Activated CD4-positive, alpha-beta memory T cell treated with anti-CD3 and anti-CD28 coated beads for 36 hours (primary cell): ENCODE measurements at regions of chr14 and their contacts with region 1.

Region 1: DNA sequence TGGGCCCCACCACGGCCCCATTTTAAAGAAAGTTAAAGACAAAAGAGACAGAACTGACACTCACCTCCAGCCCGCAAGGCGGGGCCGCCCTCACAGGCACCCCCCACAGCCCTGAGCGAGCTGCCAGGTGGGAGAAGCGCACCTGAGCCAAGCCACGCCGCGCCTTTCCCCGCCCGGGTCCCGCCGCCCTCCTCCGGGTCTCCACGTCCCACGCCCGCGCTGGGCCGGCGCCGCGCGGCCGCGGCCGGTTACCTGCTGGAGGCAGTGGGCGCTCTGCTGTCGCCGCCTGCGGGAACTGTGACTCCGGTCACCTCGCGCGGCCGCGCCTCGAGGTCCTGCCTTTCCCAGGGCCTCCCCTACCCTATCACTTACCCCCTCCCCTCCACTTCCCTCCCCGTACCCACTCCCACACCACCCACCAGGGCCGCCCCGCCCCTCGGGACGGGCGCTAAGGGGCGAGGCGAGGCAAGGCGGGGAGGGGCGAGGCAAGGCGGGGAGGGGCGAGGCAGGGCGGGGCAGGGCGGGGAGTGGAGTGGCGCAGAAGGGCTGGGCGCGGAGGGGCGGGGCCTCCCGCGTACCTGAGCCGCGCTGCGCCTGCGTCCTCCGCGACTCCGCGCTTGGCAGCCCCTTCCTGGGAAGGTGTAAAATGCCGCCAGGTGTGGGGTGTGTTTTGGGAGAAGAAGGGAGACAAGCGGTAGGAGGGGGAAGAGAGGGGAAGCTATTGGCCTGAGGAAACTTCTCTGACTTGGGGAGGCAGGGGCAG is 31.0 kb downstream of the TC2N start:
- DNase-seq: peak; percentile 92
- H3K4me3 Mint-ChIP-seq: peak overlapping the region; percentile 87
- H3K27ac Mint-ChIP-seq: peak overlapping the region; percentile 79
- H3K4me1 Mint-ChIP-seq: peaks cover 66% of the 10 kb centered on the region
- H3K27me3 Mint-ChIP-seq: no peaks in the 10 kb centered on the region

Region 2: GRCh38 chr14:91817566-91818325 is 18.6 kb before region 1 on chr14:
- CTCF ChIA-PET with region 1: interaction called, 7 read pairs
- POLR2A ChIA-PET with region 1: interaction called, 3 read pairs
- intact Hi-C with region 1: loop called (anchors 2 kb)
- DNase-seq: peak; percentile 51
- H3K4me3 Mint-ChIP-seq: peak overlapping the region; percentile 40
- H3K27ac Mint-ChIP-seq: peak overlapping the region; percentile 85
- H3K4me1 Mint-ChIP-seq: peaks cover 65% of the 10 kb centered on the region
- H3K27me3 Mint-ChIP-seq: no peaks in the 10 kb centered on the region

Region 3: DNA sequence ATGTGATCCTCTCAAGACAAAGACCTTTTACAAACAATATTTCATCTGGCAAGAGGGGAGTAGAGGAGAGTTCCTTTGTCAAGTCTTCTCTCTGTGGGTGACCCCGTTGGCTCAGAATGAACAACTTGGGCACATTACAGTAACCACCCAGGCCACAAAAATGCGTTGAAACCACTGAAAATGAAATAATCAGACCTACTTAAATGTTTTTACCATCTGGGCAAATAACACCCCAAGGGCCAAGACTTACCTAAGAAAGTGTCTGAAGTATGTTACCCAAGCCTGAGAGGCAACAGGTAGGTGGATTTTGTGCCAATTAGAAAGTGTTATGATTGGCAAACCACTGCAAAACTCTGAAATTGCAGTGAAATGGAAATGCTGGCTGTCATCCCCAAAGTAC is 29.8 kb after region 1 on chr14:
- CTCF ChIA-PET with region 1: interaction called, 8 read pairs
- POLR2A ChIA-PET with region 1: no interaction called
- intact Hi-C with region 1: loop called (anchors 1 kb)
- DNase-seq: peak; percentile 73
- H3K4me3 Mint-ChIP-seq: peak overlapping the region; percentile 87
- H3K27ac Mint-ChIP-seq: peak overlapping the region; percentile 94
- H3K4me1 Mint-ChIP-seq: peaks cover 92% of the 10 kb centered on the region
- H3K27me3 Mint-ChIP-seq: no peaks in the 10 kb centered on the region

Region 4: GRCh38 chr14:91925001-91925726 is 88.9 kb after region 1 on chr14:
- CTCF ChIA-PET with region 1: no interaction called
- POLR2A ChIA-PET with region 1: no interaction called
- intact Hi-C with region 1: no loop called
- DNase-seq: no peak
- H3K4me3 Mint-ChIP-seq: no peak overlapping the region
- H3K27ac Mint-ChIP-seq: no peak overlapping the region
- H3K4me1 Mint-ChIP-seq: no peaks in the 10 kb centered on the region
- H3K27me3 Mint-ChIP-seq: no peaks in the 10 kb centered on the region